ENCODE measurements at regions of chr5 and their contacts with region 1.

Region 1: DNA sequence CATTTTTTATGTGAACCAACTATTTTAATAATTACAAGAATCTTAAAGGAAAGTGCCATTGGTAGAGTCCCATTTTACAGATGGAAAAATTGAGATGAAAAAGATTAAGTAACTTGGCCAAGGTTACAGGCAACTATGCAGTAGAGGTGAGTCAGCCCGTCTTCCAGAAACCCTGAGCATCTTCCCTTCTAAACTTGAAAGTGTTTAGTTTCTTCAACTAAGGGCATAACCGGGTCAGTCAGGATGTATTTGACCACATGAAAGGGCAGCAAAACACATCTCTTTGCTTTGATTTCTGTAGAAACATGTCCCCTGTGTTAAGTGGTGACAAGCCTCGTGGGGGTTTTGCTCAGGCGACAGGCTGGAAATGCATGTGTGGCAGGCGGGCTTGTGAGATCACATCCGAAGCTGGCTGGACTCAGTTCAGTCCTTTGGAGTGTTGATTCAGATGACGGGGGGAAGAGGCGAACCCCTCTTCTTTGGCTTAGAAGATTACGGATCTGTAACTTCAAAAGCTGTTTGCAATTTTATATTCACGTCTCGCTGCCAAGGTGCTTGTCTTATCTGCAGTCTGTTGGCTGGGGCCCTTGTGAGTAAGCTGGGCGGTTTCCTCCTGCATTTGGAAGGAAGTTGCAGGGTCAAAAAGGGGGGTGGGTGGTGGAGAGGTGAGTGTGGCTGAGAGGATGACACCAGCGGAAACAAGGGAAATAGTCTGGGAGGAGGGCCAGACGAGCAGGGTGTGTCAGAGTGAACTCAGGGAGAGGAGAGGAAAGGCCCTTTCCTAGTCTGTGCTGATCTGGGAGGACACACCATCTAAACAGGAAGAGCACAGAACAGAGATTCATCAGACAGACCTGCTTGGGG is 78.9 kb upstream of the RPS23 start:
- DNase-seq: peak; percentile 88
- H3K4me3 Mint-ChIP-seq: peak overlapping the region; percentile 62
- H3K27ac Mint-ChIP-seq: peak overlapping the region; percentile 99
- H3K4me1 Mint-ChIP-seq: peaks cover 52% of the 10 kb centered on the region
- H3K27me3 Mint-ChIP-seq: no peaks in the 10 kb centered on the region

Region 2: DNA sequence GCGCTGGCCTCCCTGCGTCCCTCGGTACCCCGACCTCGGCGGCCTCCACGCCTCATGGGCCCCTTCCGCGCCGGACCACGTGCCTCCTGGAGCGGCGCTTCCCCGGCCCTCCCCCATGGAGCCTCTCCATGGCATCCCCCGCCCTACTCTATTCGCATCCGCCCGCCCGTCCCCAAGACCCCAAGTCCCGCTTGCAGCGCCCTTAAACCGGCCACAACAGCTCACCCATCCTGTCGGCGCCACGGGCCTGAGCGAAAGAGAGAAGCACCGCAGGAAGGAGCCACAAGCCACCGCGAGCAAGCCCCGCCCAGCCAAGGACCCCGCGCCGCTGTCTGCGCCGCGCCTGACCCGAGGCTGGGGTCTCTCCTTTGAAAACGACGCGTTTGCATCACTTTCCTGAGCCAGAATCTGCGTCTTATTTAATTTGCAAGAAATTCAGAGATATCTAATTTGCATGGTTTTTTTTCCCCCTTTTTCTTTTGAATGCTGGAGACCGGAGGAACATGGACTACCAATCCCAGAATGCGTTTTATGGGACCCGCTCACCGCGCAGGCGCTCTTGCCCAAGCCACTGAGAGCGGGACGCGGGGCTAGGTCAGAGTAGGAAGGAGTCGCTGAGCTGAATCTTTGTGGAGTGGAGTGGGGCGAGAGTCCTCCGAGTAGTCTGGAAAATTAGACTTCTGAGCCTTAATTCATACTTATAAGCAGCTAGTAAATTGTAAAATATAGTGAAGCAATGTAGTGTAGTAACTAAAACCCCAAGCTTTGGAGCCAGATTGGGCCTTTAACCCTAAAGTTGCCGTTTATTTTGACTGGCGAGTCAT is 78.7 kb before region 1 on chr5 and contains the start of gene RPS23:
- CTCF ChIA-PET with region 1: no interaction called
- POLR2A ChIA-PET with region 1: no interaction called
- intact Hi-C with region 1: loop called (anchors 1 kb)
- DNase-seq: peak; percentile 92
- H3K4me3 Mint-ChIP-seq: peak within 1 kb of the TSS; percentile 86
- H3K27ac Mint-ChIP-seq: peak within 1 kb of the TSS; percentile 97
- H3K4me1 Mint-ChIP-seq: peaks cover 50% of the 10 kb centered on the region
- H3K27me3 Mint-ChIP-seq: no peaks in the 10 kb centered on the region
- total RNA-seq, gene RPS23: 2,621 to 2,722 TPM

Region 3: GRCh38 chr5:82389347-82389746 is 32.3 kb after region 1 on chr5:
- CTCF ChIA-PET with region 1: interaction called, 3 read pairs
- POLR2A ChIA-PET with region 1: interaction called, 9 read pairs
- intact Hi-C with region 1: loop called (anchors 1 kb)
- DNase-seq: no peak
- H3K4me3 Mint-ChIP-seq: peak overlapping the region; percentile 0
- H3K27ac Mint-ChIP-seq: peak overlapping the region; percentile 76
- H3K4me1 Mint-ChIP-seq: peaks cover 18% of the 10 kb centered on the region
- H3K27me3 Mint-ChIP-seq: no peaks in the 10 kb centered on the region

Region 4: DNA sequence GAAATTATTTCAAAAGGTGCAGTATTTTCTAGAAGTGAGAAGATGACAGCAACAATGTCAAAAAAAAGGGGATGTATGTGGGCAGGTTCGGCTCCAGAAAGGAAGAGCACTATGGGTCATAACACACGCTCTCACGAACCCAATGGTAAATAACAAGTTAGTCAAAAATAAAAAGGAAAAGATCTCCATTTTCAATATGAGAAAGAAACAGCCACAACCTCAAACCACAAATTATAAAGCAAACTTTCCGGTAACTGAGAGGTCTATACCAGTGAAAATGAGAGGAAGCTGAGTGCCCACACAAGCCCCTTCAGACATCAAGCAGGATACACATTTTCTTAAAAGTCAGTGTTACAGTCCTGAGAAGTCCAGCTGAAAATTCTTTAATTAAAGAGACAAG is 319.6 kb after region 1 on chr5:
- CTCF ChIA-PET with region 1: no interaction called
- POLR2A ChIA-PET with region 1: no interaction called
- intact Hi-C with region 1: loop called (anchors 2 kb)
- DNase-seq: peak; percentile 20
- H3K4me3 Mint-ChIP-seq: peak overlapping the region; percentile 42
- H3K27ac Mint-ChIP-seq: peak overlapping the region; percentile 67
- H3K4me1 Mint-ChIP-seq: peaks cover 23% of the 10 kb centered on the region
- H3K27me3 Mint-ChIP-seq: peaks cover 4% of the 10 kb centered on the region

Region 5: DNA sequence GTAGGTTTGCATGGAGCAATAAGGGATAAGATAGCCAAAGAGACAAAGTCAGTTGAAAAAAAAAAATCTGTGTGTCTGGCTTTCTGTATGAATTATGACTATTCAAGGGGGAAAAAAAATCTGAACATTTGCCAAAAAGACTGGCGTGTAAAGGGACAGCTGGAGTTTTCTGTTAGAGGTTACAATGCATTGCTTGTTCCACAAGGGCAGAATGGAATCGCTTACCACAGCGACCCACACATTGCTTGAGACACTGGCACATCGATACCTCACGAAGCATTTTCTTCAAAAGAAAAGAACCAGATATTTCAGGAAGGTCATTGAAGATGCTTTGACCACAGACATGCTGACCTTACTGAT is 392.4 kb after region 1 on chr5:
- CTCF ChIA-PET with region 1: no interaction called
- POLR2A ChIA-PET with region 1: no interaction called
- intact Hi-C with region 1: no loop called
- DNase-seq: no peak
- H3K4me3 Mint-ChIP-seq: no peak overlapping the region
- H3K27ac Mint-ChIP-seq: no peak overlapping the region
- H3K4me1 Mint-ChIP-seq: peaks cover 17% of the 10 kb centered on the region
- H3K27me3 Mint-ChIP-seq: no peaks in the 10 kb centered on the region

Region 6: DNA sequence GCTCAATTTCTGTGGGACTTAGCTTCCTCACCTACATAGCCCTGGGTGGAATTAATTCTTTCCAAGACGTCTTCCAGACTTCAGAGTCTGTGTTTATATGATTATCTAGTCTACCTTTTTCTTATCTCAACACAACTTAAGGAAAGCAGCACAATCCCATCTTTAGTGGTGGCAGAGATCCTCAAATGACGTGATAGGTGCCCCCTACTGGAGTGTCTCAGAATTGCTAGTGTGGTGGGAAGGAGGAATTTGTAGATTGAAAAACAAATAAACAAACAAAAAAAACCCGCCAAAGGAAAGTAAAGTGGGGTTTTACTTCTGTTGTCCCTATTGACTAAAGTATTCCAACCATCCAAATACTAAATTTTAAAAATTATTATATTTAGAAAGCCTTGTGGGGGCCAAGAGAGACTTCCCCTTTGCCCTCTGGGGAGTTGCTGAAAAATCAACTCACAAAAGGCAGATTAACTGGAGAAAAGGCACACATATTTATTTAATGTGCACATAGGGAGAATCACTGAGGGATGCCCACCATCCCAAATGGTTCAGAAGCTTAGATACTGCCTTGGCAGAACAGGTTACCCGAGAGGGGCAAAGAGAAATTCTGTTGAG is 436.9 kb after region 1 on chr5:
- CTCF ChIA-PET with region 1: interaction called, 50 read pairs
- POLR2A ChIA-PET with region 1: no interaction called
- intact Hi-C with region 1: loop called (anchors 2 kb)
- DNase-seq: peak; percentile 44
- H3K4me3 Mint-ChIP-seq: no peak overlapping the region
- H3K27ac Mint-ChIP-seq: no peak overlapping the region
- H3K4me1 Mint-ChIP-seq: no peaks in the 10 kb centered on the region
- H3K27me3 Mint-ChIP-seq: peaks cover 7% of the 10 kb centered on the region

Region 7: GRCh38 chr5:82967072-82967471 is 610.0 kb after region 1 on chr5:
- CTCF ChIA-PET with region 1: no interaction called
- POLR2A ChIA-PET with region 1: no interaction called
- intact Hi-C with region 1: loop called (anchors 2 kb)
- DNase-seq: no peak
- H3K4me3 Mint-ChIP-seq: no peak overlapping the region
- H3K27ac Mint-ChIP-seq: no peak overlapping the region
- H3K4me1 Mint-ChIP-seq: peaks cover 18% of the 10 kb centered on the region
- H3K27me3 Mint-ChIP-seq: no peaks in the 10 kb centered on the region

Region 8: DNA sequence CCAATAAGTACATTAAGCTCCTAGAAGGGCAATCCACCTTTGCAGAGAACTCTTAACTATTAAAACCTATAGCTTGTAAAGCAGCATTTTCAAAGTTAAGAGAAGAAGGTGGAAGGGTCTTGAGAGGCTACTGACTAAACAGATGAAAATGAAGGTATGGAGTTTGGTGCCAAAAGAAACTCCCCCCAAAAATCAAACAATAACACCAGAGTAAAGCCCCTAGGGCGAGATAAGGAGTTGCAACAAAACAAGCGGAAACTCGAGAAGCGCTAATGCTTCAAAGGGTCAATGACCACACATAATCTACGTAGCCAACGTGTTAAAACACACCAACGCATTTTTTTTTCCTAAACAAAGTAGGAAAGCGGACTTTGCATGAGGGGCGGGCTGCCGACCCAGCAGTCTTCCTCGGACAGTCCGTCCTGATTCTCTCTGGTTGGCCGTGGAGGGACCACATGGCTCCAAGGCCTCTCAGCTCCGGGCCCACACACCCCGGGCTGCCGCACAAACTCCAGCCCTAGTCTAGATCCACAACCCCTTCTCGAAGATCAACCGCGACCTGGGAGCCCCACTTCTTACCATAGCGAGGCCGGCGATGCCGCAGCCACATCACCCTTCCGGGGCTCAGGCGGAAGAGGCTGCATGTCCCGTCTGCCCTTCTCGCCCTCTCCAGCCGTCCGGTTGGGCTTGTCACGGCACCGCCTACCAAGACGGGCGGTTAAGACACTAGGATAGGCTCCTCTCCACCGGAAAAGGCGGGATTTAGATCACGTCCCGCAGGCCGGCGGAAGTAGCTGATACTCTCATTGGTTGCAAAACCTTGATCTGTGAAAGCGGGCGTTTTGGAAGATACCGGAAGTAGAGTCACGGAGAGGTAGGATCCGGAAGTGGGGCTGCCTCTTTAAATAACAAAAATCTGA is 720.0 kb after region 1 on chr5 and contains the starts of genes TMEM167A and XRCC4:
- CTCF ChIA-PET with region 1: no interaction called
- POLR2A ChIA-PET with region 1: no interaction called
- intact Hi-C with region 1: loop called (anchors 1 kb)
- DNase-seq: peak; percentile 96
- H3K4me3 Mint-ChIP-seq: peak within 1 kb of the TSS; percentile 99
- H3K27ac Mint-ChIP-seq: peak within 1 kb of the TSS; percentile 98
- H3K4me1 Mint-ChIP-seq: peaks cover 50% of the 10 kb centered on the region
- H3K27me3 Mint-ChIP-seq: no peaks in the 10 kb centered on the region
- total RNA-seq, gene TMEM167A: 73.6 to 78.6 TPM
- total RNA-seq, gene XRCC4: 14.0 to 15.2 TPM